Calu3 (cell line): ENCODE measurements at regions of chr2 and their contacts with region 1.

Region 1: GRCh38 chr2:185404578-185404977 is 334.0 kb upstream of the FSIP2 start:
- DNase-seq: no peak
- H3K4me3 Mint-ChIP-seq: no peak overlapping the region
- H3K27ac Mint-ChIP-seq: no peak overlapping the region
- H3K4me1 Mint-ChIP-seq: no peaks in the 10 kb centered on the region
- H3K27me3 Mint-ChIP-seq: no peaks in the 10 kb centered on the region
- CTCF ChIP-seq: no peak

Region 2: GRCh38 chr2:185299867-185300266 is 104.7 kb before region 1 on chr2:
- CTCF ChIA-PET with region 1: no interaction called
- intact Hi-C with region 1: loop called (anchors 5 kb)
- DNase-seq: no peak
- H3K4me3 Mint-ChIP-seq: no peak overlapping the region
- H3K27ac Mint-ChIP-seq: no peak overlapping the region
- H3K4me1 Mint-ChIP-seq: no peaks in the 10 kb centered on the region
- H3K27me3 Mint-ChIP-seq: no peaks in the 10 kb centered on the region
- CTCF ChIP-seq: no peak

Region 3: DNA sequence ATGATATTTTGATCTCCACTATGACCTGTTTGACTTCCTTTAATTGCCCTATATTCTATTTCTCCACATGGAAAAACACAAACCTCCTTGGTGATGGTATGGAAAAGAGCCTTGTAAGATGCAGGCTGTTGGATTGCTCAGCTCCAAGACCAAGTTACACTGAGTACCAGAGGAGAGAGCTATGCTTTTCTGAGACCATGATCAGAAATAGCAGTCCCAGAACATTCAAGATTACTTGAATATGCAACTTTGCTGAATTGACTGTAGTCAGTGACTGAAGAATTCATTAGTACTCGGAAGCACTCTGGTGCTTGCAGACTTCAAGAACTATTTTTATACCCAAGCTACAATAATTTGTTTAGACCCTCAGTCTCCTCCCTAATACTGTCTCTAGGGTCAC is 23.4 kb after region 1 on chr2:
- CTCF ChIA-PET with region 1: no interaction called
- intact Hi-C with region 1: loop called (anchors 2 kb)
- DNase-seq: no peak
- H3K4me3 Mint-ChIP-seq: no peak overlapping the region
- H3K27ac Mint-ChIP-seq: no peak overlapping the region
- H3K4me1 Mint-ChIP-seq: no peaks in the 10 kb centered on the region
- H3K27me3 Mint-ChIP-seq: no peaks in the 10 kb centered on the region
- CTCF ChIP-seq: no peak